Esophagus squamous epithelium (tissue), 5 donors: ENCODE measurements at regions of chr1 and their contacts with region 1.

Region 1: GRCh38 chr1:110106013-110106941 is 6.0 kb upstream of the UBL4B start:
- DNase-seq: no peak
- H3K4me3 ChIP-seq: no peak overlapping the region
- H3K27ac ChIP-seq: no peak overlapping the region
- H3K4me1 ChIP-seq: no peaks in the 10 kb centered on the region
- H3K27me3 ChIP-seq: peaks cover 0 to 28% (median 0%) of the 10 kb centered on the region in 4 donors
- CTCF ChIP-seq: peak; percentile 61 to 88 (median 78)
- POLR2A ChIP-seq: no peak

Region 2: GRCh38 chr1:110053557-110054428 is 52.5 kb before region 1 on chr1:
- intact Hi-C with region 1: loop called (anchors 5 kb)
- DNase-seq: no peak
- H3K4me3 ChIP-seq: no peak overlapping the region
- H3K27ac ChIP-seq: no peak overlapping the region
- H3K4me1 ChIP-seq: peaks cover 7 to 53% (median 33%) of the 10 kb centered on the region in 3 donors
- H3K27me3 ChIP-seq: no peaks in the 10 kb centered on the region
- CTCF ChIP-seq: peak; percentile 75 to 95 (median 84)
- POLR2A ChIP-seq: no peak

Region 3: DNA sequence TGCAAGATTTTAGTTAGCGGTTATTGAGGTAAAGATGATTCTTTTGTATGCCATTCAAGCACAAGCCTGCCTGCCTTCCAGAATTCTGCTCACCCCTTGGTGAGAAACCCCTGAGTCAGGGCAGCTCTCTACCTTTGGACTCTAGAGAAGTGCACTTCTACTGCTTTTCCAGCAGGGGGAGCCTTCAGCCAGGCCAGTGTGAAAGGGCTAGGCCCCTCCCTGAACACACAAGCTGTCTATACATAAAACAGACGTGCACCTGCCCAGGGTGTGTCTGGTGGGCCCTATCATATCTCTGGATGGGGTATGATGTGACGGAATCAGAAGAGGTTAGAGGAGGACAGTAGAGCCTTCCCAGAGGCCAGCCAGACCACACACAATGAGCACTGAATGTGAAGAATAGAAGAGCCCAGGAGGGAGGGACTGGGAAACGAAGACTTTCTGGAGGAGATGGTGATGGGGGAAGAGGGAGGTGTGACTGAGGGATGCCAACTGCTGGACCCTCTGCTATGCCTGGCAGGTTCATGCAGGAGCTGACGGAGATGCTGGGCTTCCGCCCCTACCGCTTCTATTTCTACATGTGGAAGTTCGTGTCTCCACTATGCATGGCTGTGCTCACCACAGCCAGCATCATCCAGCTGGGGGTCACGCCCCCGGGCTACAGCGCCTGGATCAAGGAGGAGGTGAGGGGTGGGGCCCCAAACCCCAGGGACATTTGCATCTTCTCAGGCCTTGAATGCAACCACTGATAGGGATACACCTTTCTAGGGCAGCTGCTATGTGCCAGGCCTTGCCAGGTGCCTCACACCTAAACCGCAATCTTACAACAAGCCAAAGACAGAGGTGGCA is 90.9 kb after region 1 on chr1:
- intact Hi-C with region 1: no loop called
- DNase-seq: no peak
- H3K4me3 ChIP-seq: no peak overlapping the region
- H3K27ac ChIP-seq: no peak overlapping the region
- H3K4me1 ChIP-seq: no peaks in the 10 kb centered on the region
- H3K27me3 ChIP-seq: no peaks in the 10 kb centered on the region
- CTCF ChIP-seq: peak; percentile 64 to 88 (median 79)
- POLR2A ChIP-seq: no peak

Region 4: DNA sequence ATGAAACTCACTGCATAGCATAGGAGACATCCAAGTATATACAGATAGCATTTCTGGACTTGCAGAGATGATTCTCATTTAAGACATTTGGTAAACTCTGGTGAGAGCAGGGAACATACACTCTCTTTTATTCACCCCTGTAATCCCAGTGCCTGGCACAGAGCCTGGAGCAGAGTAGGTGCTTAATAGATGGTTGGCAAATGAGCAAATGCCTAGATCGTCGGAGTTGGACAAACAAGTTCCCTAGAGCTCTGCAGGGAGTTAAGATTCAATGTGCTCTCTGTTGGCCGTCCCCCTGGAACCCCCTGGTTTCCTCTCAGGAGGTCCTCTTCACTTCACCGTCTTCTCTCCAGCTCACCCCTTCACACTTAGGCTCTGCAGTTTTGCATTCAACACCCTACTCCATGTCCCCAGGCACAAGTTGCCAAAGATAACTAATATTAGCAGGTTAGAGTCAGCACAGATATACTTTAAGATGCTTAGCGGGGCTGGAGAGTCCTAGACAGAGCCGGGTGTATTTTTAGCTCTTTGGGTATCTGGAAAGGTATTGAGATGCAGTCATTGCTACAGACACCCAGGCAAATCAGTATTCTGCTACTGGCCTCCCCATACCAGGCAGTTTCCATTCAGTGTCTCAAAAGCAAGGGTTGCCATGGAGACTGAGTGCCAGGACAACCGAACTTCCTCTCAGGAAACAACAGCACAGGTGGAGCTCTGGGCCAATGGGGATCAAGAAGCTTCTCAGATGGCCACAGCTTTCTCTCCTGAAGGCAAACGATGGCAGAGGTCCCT is 148.9 kb after region 1 on chr1:
- intact Hi-C with region 1: no loop called
- DNase-seq: no peak
- H3K4me3 ChIP-seq: no peak overlapping the region
- H3K27ac ChIP-seq: no peak overlapping the region
- H3K4me1 ChIP-seq: peaks cover 0 to 16% (median 3%) of the 10 kb centered on the region in 3 donors
- H3K27me3 ChIP-seq: no peaks in the 10 kb centered on the region
- CTCF ChIP-seq: no peak
- POLR2A ChIP-seq: no peak